ENCODE measurements at regions of chr1 and their contacts with region 1.

Region 1: GRCh38 chr1:162854245-162854882 is 6.6 kb downstream of the CCDC190 start:
- DNase-seq: peak; percentile 58
- H3K4me3 ChIP-seq: no peak overlapping the region
- H3K27ac ChIP-seq: no peak overlapping the region
- H3K4me1 ChIP-seq: peaks cover 38% of the 10 kb centered on the region
- H3K27me3 ChIP-seq: no peaks in the 10 kb centered on the region
- CTCF ChIP-seq: peak; percentile 65 to 82

Region 2: GRCh38 chr1:162878000-162878596 is 23.7 kb after region 1 on chr1:
- CTCF ChIA-PET with region 1: no interaction called
- dilution Hi-C with region 1: no loop called
- in situ Hi-C with region 1: no loop called
- intact Hi-C with region 1: loop called (anchors 1 kb)
- DNase-seq: peak; percentile 67
- H3K4me3 ChIP-seq: no peak overlapping the region
- H3K27ac ChIP-seq: no peak overlapping the region
- H3K4me1 ChIP-seq: no peaks in the 10 kb centered on the region
- H3K27me3 ChIP-seq: no peaks in the 10 kb centered on the region
- CTCF ChIP-seq: peak; percentile 81 to 89

Region 3: DNA sequence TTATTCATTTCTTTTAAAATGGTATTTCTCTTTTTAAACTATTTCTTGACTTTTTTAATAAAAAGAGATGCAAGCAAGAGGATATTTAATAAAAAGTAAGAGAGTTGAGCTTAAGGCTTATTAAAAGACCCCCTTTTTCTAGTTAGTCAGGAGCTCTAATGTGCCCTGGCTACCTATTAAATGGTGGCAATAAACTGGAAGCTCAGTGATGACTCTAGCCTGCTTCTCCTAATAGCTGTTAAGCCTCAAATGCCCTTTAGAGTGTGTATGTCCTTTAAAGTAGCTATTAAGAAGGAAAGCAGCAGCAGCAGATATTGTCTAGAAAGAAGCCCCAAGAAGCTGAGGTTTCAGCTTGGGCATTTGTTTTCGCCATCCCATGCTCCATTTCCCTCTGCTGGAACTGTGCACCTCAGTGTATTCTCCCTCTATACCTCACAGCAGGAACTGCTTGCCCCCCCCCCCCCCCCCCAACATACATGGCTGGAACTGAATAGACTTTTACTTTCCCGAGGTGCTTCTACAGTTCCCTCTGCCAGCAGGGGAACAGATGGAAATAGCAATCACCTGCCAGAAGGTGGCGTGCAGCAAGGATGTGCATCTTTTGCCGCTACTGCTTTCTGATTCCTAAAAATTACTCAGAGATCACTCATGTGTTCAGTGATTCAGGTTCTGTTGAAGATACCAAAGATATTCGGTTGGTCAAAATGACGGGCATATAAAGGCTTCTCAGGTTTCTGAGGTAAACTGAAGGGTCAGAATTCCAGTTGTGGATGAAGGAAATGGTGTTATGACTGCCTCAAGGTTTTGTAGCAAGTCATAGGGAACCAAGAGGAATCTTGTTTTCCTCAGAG is 217.3 kb after region 1 on chr1:
- CTCF ChIA-PET with region 1: no interaction called
- dilution Hi-C with region 1: no loop called
- in situ Hi-C with region 1: no loop called
- intact Hi-C with region 1: loop called (anchors 1 kb)
- DNase-seq: peak; percentile 87
- H3K4me3 ChIP-seq: no peak overlapping the region
- H3K27ac ChIP-seq: peak overlapping the region; percentile 26
- H3K4me1 ChIP-seq: peaks cover 19% of the 10 kb centered on the region
- H3K27me3 ChIP-seq: no peaks in the 10 kb centered on the region
- CTCF ChIP-seq: peak; percentile 89 to 93

Region 4: GRCh38 chr1:163315773-163316374 is 461.5 kb after region 1 on chr1:
- CTCF ChIA-PET with region 1: no interaction called
- dilution Hi-C with region 1: loop called (anchors 25 kb)
- in situ Hi-C with region 1: loop called (anchors 5 to 10 kb)
- intact Hi-C with region 1: loop called (anchors 2 kb)
- DNase-seq: peak; percentile 10
- H3K4me3 ChIP-seq: no peak overlapping the region
- H3K27ac ChIP-seq: no peak overlapping the region
- H3K4me1 ChIP-seq: peaks cover 7% of the 10 kb centered on the region
- H3K27me3 ChIP-seq: no peaks in the 10 kb centered on the region
- CTCF ChIP-seq: peak; percentile 56 to 63

Measured in mammary epithelial cell (primary cell).